Endothelial cell of umbilical vein (primary cell): ENCODE measurements at regions of chr11 and their contacts with region 1.

Region 1: GRCh38 chr11:119334174-119334930 is at the start of gene RNF26:
- DNase-seq: peak; percentile 97
- H3K4me3 ChIP-seq: peak within 1 kb of the TSS; percentile 54 to 78 (median 77)
- H3K27ac ChIP-seq: peak within 1 kb of the TSS; percentile 34
- H3K4me1 ChIP-seq: peaks cover 34% of the 10 kb centered on the region
- H3K27me3 ChIP-seq: peaks cover 0 to 2% of the 10 kb centered on the region in 2 experiments
- CTCF ChIP-seq: no peak
- POLR2A ChIP-seq: peak; percentile 71
- total RNA-seq, gene RNF26: 37.9 and 40.1 TPM in 2 replicates

Region 2: GRCh38 chr11:119101759-119102423 is 232.5 kb before region 1 on chr11 and contains the start of gene DPAGT1:
- CTCF ChIA-PET with region 1: interaction called, 15 read pairs
- POLR2A ChIA-PET with region 1: no interaction called
- dilution Hi-C with region 1: no loop called
- intact Hi-C with region 1: no loop called
- DNase-seq: peak; percentile 96
- H3K4me3 ChIP-seq: peak within 1 kb of the TSS; percentile 81 to 97 (median 86)
- H3K27ac ChIP-seq: peak within 1 kb of the TSS; percentile 94
- H3K4me1 ChIP-seq: peaks cover 21% of the 10 kb centered on the region
- H3K27me3 ChIP-seq: no peaks in the 10 kb centered on the region
- CTCF ChIP-seq: no peak
- POLR2A ChIP-seq: no peak
- total RNA-seq, gene DPAGT1: 48.4 and 62.0 TPM in 2 replicates

Region 3: GRCh38 chr11:119205574-119206510 is 128.5 kb before region 1 on chr11 and contains the start of gene CBL:
- CTCF ChIA-PET with region 1: interaction called, 31 read pairs
- POLR2A ChIA-PET with region 1: interaction called, 7 read pairs
- dilution Hi-C with region 1: no loop called
- intact Hi-C with region 1: loop called (anchors 1 kb)
- DNase-seq: peak; percentile 90
- H3K4me3 ChIP-seq: peak within 1 kb of the TSS; percentile 88 to 97 (median 93)
- H3K27ac ChIP-seq: peak within 1 kb of the TSS; percentile 55
- H3K4me1 ChIP-seq: peaks cover 17% of the 10 kb centered on the region
- H3K27me3 ChIP-seq: no peaks in the 10 kb centered on the region
- CTCF ChIP-seq: peak; percentile 81 to 95
- POLR2A ChIP-seq: peak; percentile 35
- total RNA-seq, gene CBL: 40.1 and 41.5 TPM in 2 replicates

Region 4: DNA sequence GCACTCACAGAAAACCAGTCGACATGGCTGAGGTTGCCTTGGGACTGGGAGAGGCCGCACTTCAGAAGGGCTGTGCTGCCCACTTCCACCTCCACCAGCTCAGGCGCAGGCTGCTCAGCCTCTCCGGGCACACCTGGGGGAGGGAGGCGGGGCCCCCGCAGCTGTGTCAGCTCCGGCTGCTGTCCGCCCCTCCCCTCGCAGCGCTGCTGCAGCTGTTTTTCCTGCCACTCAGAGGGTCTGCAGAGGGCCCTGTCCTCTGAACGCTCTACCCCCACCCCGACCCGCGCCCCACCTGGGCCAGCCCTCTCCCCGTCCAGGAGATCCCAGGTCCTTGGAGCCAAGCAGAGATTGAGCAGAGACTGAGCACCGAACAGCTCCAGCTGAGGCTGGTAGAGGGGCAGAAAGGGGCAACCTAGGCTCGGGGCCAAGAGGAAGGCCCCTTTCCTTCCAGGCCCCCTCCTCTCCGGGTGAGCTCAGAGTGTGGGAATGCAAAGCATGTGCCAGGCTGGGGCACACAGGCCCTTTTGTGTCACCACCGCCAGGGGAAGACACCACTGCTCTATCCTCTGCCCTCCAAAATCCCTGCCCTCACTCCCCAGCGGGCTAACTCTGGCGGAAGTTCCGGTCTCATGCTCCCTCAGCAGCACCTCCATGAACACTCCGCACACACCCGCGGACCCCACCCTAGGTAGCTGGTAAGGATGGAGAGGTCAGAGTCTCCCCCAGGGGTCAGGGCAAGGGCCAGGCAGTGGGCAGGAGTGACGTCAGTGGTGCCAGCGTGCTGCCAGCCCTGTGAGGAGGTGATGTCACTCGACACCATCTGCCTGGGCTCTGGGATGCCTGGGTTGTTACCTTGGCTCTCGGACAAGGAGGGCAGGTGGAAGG is 19.0 kb before region 1 on chr11:
- CTCF ChIA-PET with region 1: interaction called, 301 read pairs
- POLR2A ChIA-PET with region 1: interaction called, 18 read pairs
- dilution Hi-C with region 1: no loop called
- intact Hi-C with region 1: no loop called
- DNase-seq: peak; percentile 49
- H3K4me3 ChIP-seq: peak overlapping the region; percentile 87 to 93 (median 89)
- H3K27ac ChIP-seq: peak overlapping the region; percentile 80
- H3K4me1 ChIP-seq: peaks cover 44% of the 10 kb centered on the region
- H3K27me3 ChIP-seq: no peaks in the 10 kb centered on the region
- CTCF ChIP-seq: peak; percentile 16 to 46
- POLR2A ChIP-seq: no peak

Region 5: DNA sequence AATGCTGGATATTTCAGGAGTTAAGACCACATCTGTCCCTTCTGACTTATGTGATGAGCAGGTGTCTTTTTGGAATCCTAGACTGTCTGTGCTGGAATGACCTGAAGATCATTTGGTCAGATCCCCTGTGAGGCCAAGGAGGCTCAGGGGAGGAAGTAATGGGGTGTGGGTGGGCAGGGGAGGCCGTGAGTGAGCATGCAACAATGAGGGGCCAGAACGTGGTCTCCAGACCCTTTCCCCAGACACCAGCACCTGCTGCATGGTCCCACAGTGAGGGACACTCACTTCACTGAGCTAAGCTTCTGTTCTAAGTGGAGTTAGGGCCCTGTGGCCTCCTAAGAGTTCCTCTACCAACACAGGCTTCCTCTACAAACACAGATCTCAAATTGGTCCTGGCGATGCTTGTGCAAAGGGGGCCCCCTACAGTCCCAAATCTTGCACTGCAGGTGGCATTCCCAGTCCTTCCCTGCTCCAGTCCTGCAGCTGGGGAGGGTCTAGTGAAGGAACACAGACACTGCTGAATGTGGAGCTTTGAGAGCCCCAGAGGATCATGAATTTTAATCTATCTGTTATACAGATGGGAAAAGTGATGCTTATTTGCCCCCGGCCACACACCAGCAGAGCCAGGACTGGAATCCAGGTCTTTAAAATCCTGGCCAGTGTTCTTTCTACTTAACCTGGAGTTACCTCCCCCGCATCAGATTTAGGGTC is 39.7 kb after region 1 on chr11:
- CTCF ChIA-PET with region 1: interaction called, 134 read pairs
- POLR2A ChIA-PET with region 1: no interaction called
- dilution Hi-C with region 1: no loop called
- intact Hi-C with region 1: no loop called
- DNase-seq: peak; percentile 79
- H3K4me3 ChIP-seq: no peak overlapping the region
- H3K27ac ChIP-seq: no peak overlapping the region
- H3K4me1 ChIP-seq: no peaks in the 10 kb centered on the region
- H3K27me3 ChIP-seq: no peaks in the 10 kb centered on the region
- CTCF ChIP-seq: peak; percentile 90 to 92
- POLR2A ChIP-seq: no peak

Region 6: GRCh38 chr11:119445850-119446249 is 111.5 kb after region 1 on chr11:
- CTCF ChIA-PET with region 1: no interaction called
- POLR2A ChIA-PET with region 1: no interaction called
- dilution Hi-C with region 1: no loop called
- intact Hi-C with region 1: no loop called
- DNase-seq: no peak
- H3K4me3 ChIP-seq: no peak overlapping the region
- H3K27ac ChIP-seq: no peak overlapping the region
- H3K4me1 ChIP-seq: no peaks in the 10 kb centered on the region
- H3K27me3 ChIP-seq: peaks cover 0 to 2% of the 10 kb centered on the region in 2 experiments
- CTCF ChIP-seq: no peak
- POLR2A ChIP-seq: no peak

Region 7: DNA sequence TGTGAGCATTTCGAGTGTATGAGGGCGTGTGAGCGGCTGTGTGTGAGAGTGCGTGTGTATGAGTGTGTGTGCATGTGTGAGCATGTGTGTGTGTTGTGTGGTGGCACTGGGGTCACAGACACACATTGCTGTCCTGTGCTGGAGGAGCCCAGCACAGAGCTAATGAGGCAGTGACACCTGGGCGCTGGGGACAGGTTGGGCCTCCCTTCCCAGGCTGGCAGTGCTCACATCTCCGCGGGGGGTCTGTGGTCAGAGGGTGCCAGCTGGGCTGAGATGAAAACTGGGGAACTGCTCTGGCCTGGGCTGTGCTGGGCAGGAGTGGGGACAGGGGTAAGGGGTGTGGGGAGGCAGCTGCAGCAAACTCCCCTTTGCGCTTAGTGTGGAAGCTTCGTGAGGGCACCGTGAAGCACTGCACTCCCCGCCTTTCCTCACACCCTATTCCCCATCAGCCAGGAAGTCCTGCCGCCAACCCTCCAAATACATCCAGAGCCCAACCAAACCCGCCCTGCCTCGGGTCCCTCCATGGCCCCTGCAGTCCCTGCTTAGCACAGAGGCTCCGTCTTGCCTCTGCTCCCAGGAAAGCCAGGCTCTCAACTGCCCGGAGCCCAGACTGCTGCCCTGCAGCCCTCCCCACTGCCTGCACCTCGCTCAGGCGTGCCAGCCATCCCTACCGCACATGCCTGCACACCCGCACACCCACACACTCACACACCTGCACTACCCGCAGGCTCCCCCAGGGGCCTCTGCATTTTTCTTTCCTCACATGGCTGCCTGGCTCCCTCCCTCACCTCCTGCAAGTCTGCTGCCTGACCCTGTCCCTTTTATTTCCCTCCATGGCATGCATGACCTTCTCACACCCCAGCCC is 150.6 kb after region 1 on chr11:
- CTCF ChIA-PET with region 1: no interaction called
- POLR2A ChIA-PET with region 1: no interaction called
- dilution Hi-C with region 1: no loop called
- intact Hi-C with region 1: no loop called
- DNase-seq: no peak
- H3K4me3 ChIP-seq: no peak overlapping the region
- H3K27ac ChIP-seq: no peak overlapping the region
- H3K4me1 ChIP-seq: no peaks in the 10 kb centered on the region
- H3K27me3 ChIP-seq: peaks cover 0 to 2% of the 10 kb centered on the region in 2 experiments
- CTCF ChIP-seq: peak; percentile 7 to 21
- POLR2A ChIP-seq: no peak

Region 8: GRCh38 chr11:119550053-119550752 is 215.9 kb after region 1 on chr11:
- CTCF ChIA-PET with region 1: no interaction called
- POLR2A ChIA-PET with region 1: no interaction called
- dilution Hi-C with region 1: no loop called
- intact Hi-C with region 1: no loop called
- DNase-seq: no peak
- H3K4me3 ChIP-seq: no peak overlapping the region
- H3K27ac ChIP-seq: no peak overlapping the region
- H3K4me1 ChIP-seq: no peaks in the 10 kb centered on the region
- H3K27me3 ChIP-seq: no peaks in the 10 kb centered on the region
- CTCF ChIP-seq: no peak
- POLR2A ChIP-seq: no peak

Region 9: DNA sequence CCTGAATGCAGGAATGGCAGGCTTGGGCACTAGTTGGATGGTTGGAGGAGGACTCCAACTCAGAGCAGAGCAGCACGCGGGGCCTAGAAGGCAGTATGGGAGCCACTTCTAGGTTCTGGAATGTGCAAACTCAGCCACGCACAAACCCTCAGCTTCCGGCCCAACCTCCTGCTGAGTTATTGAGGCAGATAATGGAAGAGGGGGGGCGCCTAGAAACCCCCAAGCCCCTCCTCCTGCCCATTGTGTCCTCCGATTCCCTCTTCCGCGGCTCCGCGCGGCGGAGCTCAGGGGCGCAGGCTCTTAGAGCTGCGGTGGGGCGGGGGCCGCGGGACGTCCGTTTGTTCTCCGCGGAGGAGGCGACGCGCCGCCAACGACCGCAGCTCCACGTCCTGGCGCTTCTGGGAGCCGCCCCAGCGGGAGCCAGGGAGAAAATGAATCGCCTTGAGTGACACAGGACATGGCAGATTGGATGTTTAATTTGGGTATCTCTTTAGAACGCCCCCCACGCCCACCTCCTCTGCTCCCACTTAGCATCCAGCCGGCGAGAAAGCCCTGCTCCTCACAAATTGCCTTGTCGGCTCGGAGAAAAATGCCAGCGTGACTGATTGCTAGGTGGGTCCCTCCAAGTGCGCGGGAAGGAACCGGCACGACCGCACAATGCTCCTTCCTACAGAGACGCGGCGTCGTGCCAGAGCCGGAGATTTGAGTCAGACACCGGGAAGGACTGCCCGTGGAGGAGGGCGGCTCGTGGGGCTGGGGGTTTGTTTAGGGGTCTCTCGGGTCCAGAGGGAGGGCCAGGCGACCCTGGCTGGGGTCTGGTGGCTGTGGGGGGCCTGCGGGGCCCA is 250.1 kb after region 1 on chr11:
- CTCF ChIA-PET with region 1: no interaction called
- POLR2A ChIA-PET with region 1: no interaction called
- dilution Hi-C with region 1: no loop called
- intact Hi-C with region 1: no loop called
- DNase-seq: peak; percentile 64
- H3K4me3 ChIP-seq: peak overlapping the region; percentile 25 to 41 (median 34)
- H3K27ac ChIP-seq: no peak overlapping the region
- H3K4me1 ChIP-seq: peaks cover 7% of the 10 kb centered on the region
- H3K27me3 ChIP-seq: peaks cover 0 to 4% of the 10 kb centered on the region in 2 experiments
- CTCF ChIP-seq: no peak
- POLR2A ChIP-seq: peak; percentile 33